CD8-positive, alpha-beta memory T cell (primary cell): ENCODE measurements at regions of chr17 and their contacts with region 1.

Region 1: DNA sequence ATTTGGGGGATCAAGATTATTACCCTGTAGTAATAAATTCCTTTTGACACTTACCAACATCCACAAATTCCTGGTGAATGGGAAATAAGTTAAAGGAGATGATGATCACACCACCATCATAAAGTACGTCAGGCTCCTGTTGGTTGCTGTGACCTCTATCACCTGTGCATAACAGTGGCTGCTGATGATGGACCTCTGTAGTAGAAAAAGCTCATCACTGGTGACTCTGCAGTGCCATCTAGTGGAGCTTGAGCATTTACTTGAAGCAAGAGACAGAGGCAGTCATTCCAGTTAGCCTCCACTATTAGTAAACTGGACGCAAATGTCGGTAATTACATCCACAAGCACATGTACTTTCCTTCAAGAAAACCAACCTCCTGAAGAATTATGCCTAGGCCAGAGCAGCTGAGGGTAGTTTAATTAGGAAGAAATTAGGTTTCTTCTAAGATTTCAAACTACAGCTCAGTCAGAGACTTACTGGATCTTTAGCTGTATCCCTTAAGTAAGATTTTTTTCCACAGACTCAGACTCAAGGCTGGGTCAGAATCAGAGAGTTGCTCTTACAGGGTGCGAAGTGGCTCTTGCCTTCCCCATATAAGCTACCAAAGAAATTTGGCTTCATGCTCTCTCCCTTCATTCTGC is 39.3 kb downstream of the CYB561 start:
- DNase-seq: peak; percentile 33 to 74 (median 53)
- H3K4me3 ChIP-seq: no peak overlapping the region
- H3K4me3 Mint-ChIP-seq: no peak overlapping the region
- H3K27ac ChIP-seq: no peak overlapping the region
- H3K27ac Mint-ChIP-seq: peak overlapping the region in 4 of 8 donors; percentile 43 to 67 (median 48)
- H3K4me1 ChIP-seq: no peaks in the 10 kb centered on the region
- H3K4me1 Mint-ChIP-seq: peaks cover 2 to 8% (median 8%) of the 10 kb centered on the region in 3 donors
- H3K27me3 ChIP-seq: no peaks in the 10 kb centered on the region
- H3K27me3 Mint-ChIP-seq: no peaks in the 10 kb centered on the region

Region 2: DNA sequence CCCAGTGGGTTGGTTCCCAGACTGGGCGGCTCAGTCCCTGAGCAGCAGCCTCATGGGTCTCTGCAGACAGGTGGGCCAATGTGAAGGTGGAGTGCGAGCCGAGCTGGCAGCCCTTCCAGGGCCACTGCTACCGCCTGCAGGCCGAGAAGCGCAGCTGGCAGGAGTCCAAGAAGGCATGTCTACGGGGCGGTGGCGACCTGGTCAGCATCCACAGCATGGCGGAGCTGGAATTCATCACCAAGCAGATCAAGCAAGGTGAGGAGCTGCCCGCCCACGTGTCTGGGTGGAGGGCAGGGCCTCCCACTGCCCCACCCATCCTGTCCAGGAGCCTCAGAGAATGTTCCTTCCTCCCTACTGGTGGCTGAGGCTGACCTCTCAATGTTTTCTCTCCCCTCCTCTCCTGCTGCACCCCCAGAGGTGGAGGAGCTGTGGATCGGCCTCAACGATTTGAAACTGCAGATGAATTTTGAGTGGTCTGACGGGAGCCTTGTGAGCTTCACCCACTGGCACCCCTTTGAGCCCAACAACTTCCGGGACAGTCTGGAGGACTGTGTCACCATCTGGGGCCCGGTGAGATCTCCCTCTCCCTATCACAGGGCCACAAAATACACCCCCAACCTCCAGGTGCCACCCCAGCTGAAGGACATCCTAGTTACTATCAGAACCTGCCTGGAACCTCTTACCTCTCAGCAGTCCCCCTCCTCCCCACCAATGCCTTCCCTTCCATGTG is 735.1 kb before region 1 on chr17:
- CTCF ChIA-PET with region 1: interaction called, 21 read pairs
- POLR2A ChIA-PET with region 1: no interaction called
- DNase-seq: no peak
- H3K4me3 ChIP-seq: no peak overlapping the region
- H3K4me3 Mint-ChIP-seq: no peak overlapping the region
- H3K27ac ChIP-seq: no peak overlapping the region
- H3K27ac Mint-ChIP-seq: peak overlapping the region in 1 of 8 donors; percentile 58
- H3K4me1 ChIP-seq: no peaks in the 10 kb centered on the region
- H3K4me1 Mint-ChIP-seq: peaks cover 0 to 9% (median 2%) of the 10 kb centered on the region in 3 donors
- H3K27me3 ChIP-seq: no peaks in the 10 kb centered on the region
- H3K27me3 Mint-ChIP-seq: no peaks in the 10 kb centered on the region

Region 3: DNA sequence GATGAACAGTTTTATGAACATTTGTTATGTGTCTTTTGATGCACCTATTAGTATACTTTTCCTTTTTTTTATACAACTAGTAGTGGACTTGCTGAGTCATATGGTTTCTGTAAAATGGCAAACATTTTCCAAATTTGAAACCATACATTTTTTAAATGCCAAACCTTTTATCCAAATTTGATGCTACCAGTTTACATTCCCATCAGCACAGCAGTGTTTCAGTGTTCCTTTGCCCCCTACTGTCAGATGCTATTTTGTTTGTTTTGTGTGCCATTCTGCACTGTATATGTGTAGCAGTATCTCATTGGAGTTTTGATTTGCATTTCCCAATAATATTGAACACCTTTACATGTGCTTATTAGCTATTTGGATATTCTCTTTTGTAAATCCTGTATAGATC is 221.4 kb before region 1 on chr17:
- CTCF ChIA-PET with region 1: no interaction called
- POLR2A ChIA-PET with region 1: no interaction called
- DNase-seq: no peak
- H3K4me3 ChIP-seq: no peak overlapping the region
- H3K4me3 Mint-ChIP-seq: no peak overlapping the region
- H3K27ac ChIP-seq: no peak overlapping the region
- H3K27ac Mint-ChIP-seq: no peak overlapping the region
- H3K4me1 ChIP-seq: no peaks in the 10 kb centered on the region
- H3K4me1 Mint-ChIP-seq: peaks cover 0 to 2% (median 0%) of the 10 kb centered on the region in 3 donors
- H3K27me3 ChIP-seq: no peaks in the 10 kb centered on the region
- H3K27me3 Mint-ChIP-seq: no peaks in the 10 kb centered on the region

Region 4: GRCh38 chr17:63358111-63358839 is 48.5 kb before region 1 on chr17:
- CTCF ChIA-PET with region 1: no interaction called
- POLR2A ChIA-PET with region 1: no interaction called
- DNase-seq: no peak
- H3K4me3 ChIP-seq: no peak overlapping the region
- H3K4me3 Mint-ChIP-seq: no peak overlapping the region
- H3K27ac ChIP-seq: no peak overlapping the region
- H3K27ac Mint-ChIP-seq: no peak overlapping the region
- H3K4me1 ChIP-seq: no peaks in the 10 kb centered on the region
- H3K4me1 Mint-ChIP-seq: no peaks in the 10 kb centered on the region
- H3K27me3 ChIP-seq: no peaks in the 10 kb centered on the region
- H3K27me3 Mint-ChIP-seq: peaks cover 0 to 3% of the 10 kb centered on the region in 2 donors

Region 5: DNA sequence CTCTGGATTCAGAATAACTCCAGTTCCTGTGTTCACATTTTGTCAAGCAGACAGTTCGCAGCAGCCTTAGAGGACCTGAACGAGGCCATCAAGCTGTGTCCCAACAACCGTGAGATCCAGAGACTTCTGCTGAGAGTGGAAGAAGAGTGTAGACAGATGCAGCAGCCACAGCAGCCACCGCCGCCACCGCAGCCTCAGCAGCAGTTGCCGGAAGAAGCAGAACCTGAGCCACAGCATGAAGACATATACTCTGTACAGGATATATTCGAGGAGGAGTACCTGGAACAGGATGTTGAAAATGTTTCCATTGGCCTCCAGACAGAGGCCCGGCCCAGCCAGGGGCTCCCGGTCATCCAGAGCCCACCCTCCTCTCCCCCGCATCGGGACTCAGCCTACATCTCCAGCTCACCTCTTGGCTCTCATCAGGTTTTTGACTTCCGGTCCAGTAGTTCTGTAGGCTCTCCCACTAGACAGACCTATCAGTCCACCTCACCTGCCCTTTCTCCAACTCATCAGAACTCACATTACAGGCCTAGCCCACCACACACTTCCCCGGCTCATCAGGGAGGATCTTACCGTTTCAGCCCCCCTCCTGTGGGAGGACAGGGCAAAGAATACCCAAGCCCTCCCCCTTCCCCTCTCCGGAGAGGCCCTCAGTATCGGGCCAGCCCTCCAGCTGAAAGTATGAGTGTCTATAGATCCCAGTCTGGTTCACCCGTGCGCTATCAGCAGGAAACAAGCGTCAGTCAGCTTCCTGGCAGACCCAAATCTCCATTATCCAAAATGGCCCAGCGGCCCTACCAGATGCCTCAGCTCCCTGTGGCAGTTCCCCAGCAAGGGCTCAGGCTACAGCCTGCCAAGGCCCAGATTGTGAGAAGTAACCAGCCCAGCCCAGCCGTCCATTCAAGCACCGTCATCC is 13.4 kb after region 1 on chr17:
- CTCF ChIA-PET with region 1: interaction called, 16 read pairs
- POLR2A ChIA-PET with region 1: interaction called, 8 read pairs
- DNase-seq: peak in 2 of 5 donors; percentile 38 to 63
- H3K4me3 ChIP-seq: no peak overlapping the region
- H3K4me3 Mint-ChIP-seq: peak overlapping the region in 6 of 7 donors; percentile 24 to 88 (median 39)
- H3K27ac ChIP-seq: no peak overlapping the region
- H3K27ac Mint-ChIP-seq: peak overlapping the region; percentile 51 to 96 (median 80)
- H3K4me1 ChIP-seq: peaks cover 18% of the 10 kb centered on the region
- H3K4me1 Mint-ChIP-seq: peaks cover 12 to 19% (median 18%) of the 10 kb centered on the region in 3 donors
- H3K27me3 ChIP-seq: no peaks in the 10 kb centered on the region
- H3K27me3 Mint-ChIP-seq: peaks cover 0 to 4% of the 10 kb centered on the region in 2 donors

Region 6: GRCh38 chr17:63478791-63479494 is 72.1 kb after region 1 on chr17:
- CTCF ChIA-PET with region 1: interaction called, 14 read pairs
- POLR2A ChIA-PET with region 1: no interaction called
- DNase-seq: peak; percentile 54 to 87 (median 70)
- H3K4me3 ChIP-seq: no peak overlapping the region
- H3K4me3 Mint-ChIP-seq: peak overlapping the region in 6 of 7 donors; percentile 67 to 87 (median 72)
- H3K27ac ChIP-seq: no peak overlapping the region
- H3K27ac Mint-ChIP-seq: peak overlapping the region in 2 of 8 donors; percentile 51 to 74
- H3K4me1 ChIP-seq: peaks cover 14% of the 10 kb centered on the region
- H3K4me1 Mint-ChIP-seq: peaks cover 14 to 31% (median 14%) of the 10 kb centered on the region in 3 donors
- H3K27me3 ChIP-seq: peaks cover 7% of the 10 kb centered on the region
- H3K27me3 Mint-ChIP-seq: peaks cover 7 to 9% of the 10 kb centered on the region in 2 donors

Region 7: GRCh38 chr17:63549946-63550807 is 143.4 kb after region 1 on chr17 and contains the start of gene DCAF7:
- CTCF ChIA-PET with region 1: no interaction called
- POLR2A ChIA-PET with region 1: no interaction called
- DNase-seq: peak; percentile 99
- H3K4me3 ChIP-seq: peak within 1 kb of the TSS; percentile 77
- H3K4me3 Mint-ChIP-seq: peak within 1 kb of the TSS; percentile 82 to 99 (median 98)
- H3K27ac ChIP-seq: peak within 1 kb of the TSS; percentile 96
- H3K27ac Mint-ChIP-seq: peak within 1 kb of the TSS; percentile 91 to 99 (median 96)
- H3K4me1 ChIP-seq: peaks cover 40% of the 10 kb centered on the region
- H3K4me1 Mint-ChIP-seq: peaks cover 41 to 48% (median 42%) of the 10 kb centered on the region in 3 donors
- H3K27me3 ChIP-seq: no peaks in the 10 kb centered on the region
- H3K27me3 Mint-ChIP-seq: no peaks in the 10 kb centered on the region
- total RNA-seq, gene DCAF7: 99.1 to 102 TPM